AG04450 (cell line): ENCODE measurements at regions of chr2 and their contacts with region 1.

Region 1: DNA sequence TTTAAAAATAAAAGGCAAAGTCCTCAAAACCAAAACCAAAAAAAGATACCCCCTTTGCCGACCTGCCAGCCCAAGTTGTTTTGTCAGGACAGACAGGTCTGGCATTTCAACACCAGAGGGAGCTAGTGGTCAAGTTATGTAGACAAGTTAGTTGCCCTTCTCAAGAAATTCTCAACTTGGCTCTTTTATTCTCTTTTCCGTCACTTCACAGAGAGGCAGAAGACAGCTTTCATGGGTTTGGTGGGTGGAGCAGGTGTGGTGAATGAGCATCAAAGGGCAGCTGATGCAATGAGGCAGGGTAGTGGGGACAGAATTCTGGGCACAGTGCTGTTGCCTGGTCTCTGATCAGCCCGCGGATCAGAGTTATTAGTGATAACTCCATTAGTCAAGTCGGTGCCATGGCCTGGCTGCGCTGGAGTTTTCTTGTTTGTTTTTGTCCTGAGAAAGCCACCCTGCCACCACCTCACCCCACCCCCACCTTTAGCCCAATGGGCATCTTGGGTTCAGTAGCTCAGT is 303.7 kb upstream of the EPAS1 start:
- DNase-seq: peak; percentile 78
- H3K4me3 ChIP-seq: no peak overlapping the region
- H3K27ac ChIP-seq: no peak overlapping the region
- H3K27me3 ChIP-seq: no peaks in the 10 kb centered on the region
- CTCF ChIP-seq: peak; percentile 86

Region 2: DNA sequence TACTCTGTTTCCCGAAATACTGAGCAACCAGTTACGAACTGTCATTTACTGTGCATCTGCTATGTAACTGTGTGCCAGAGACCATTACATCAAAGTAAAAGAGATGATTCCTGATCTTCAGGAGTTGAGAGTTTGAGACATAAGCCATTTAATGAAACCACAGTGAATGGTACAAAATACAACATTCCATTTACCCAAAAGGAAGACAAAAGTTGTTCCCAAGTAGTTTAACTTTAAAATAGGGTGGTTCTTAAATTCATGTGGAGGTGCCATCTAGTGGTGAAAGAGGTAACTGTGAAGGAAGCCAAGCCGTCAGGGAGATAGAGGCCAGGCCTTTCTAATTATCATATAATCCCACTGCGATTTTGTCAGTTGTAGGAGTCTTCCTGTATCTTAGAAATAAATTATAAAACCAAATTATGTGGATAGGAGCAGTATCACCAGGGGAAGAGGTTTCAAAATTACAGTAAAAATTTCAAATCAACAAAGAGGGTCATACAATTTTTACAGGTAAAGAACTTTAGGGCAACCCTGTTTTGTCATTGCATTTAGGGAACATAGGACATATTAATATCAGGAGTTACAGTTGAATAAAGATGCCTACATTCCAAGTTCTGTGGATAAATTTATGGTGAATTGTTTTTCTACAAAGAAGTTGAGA is 371.4 kb after region 1 on chr2:
- CTCF ChIA-PET with region 1: interaction called, 20 read pairs
- POLR2A ChIA-PET with region 1: no interaction called
- DNase-seq: peak; percentile 20
- H3K4me3 ChIP-seq: no peak overlapping the region
- H3K27ac ChIP-seq: no peak overlapping the region
- H3K27me3 ChIP-seq: no peaks in the 10 kb centered on the region
- CTCF ChIP-seq: peak; percentile 81

Region 3: GRCh38 chr2:46394649-46395510 is 401.3 kb after region 1 on chr2:
- CTCF ChIA-PET with region 1: interaction called, 10 read pairs
- POLR2A ChIA-PET with region 1: no interaction called
- DNase-seq: no peak
- H3K4me3 ChIP-seq: no peak overlapping the region
- H3K27ac ChIP-seq: no peak overlapping the region
- H3K27me3 ChIP-seq: peaks cover 2% of the 10 kb centered on the region
- CTCF ChIP-seq: no peak